ENCODE measurements at regions of chr17 and their contacts with region 1.

Region 1: DNA sequence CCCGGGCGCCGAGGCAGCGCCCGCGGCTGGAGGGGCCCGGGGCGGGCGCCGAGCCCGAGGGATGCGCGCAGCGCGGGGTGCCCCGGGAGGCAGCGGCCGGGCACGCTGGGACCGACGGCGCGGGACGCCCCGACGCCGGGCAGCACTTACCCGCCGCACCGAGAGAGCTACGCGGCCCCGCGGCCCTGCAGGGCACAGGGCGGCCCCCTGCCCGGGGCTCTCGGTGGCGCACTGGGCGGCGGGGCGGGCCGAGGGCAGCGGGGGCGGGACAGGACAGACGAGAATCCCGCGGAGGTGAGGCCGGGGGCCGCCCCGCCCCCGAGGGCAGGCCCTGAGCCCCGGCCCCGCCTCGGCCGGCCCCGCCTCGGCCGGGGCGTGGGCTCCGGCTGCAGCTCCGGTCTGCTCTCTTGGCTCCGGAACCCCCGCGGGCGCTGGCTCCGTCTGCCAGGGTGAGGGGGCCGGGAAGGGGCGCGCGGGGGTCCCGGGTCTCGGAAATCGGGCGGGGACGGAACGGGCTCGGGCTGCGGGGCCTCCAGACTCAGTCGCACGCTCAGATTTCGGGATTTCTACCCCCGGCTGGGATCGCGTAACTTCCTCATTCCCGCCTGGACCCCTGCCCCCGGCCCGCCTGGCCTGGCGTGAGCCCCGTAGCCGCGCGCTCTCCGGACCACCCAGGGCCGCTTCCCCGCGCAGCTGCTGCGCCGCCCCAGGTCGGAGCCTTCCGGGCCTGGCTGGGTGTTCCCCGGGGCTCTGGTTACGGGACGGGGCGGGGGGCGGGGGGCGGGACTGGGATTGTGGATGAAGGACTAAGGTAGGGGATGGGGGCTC is at the start of gene PLD2:
- DNase-seq: peak; percentile 90
- ATAC-seq: peak; percentile 99
- H3K4me3 Mint-ChIP-seq: peak within 1 kb of the TSS; percentile 83
- H3K27ac Mint-ChIP-seq: peak within 1 kb of the TSS; percentile 56
- H3K4me1 Mint-ChIP-seq: peaks cover 17% of the 10 kb centered on the region
- H3K27me3 Mint-ChIP-seq: no peaks in the 10 kb centered on the region
- CTCF ChIP-seq: no peak
- total RNA-seq, gene PLD2: 49.9 and 54.3 TPM in 2 replicates

Region 2: GRCh38 chr17:4881761-4882555 is 75.0 kb after region 1 on chr17:
- CTCF ChIA-PET with region 1: no interaction called
- POLR2A ChIA-PET with region 1: no interaction called
- intact Hi-C with region 1: loop called (anchors 1 kb)
- DNase-seq: peak; percentile 50
- ATAC-seq: peak; percentile 93
- H3K4me3 Mint-ChIP-seq: no peak overlapping the region
- H3K27ac Mint-ChIP-seq: no peak overlapping the region
- H3K4me1 Mint-ChIP-seq: peaks cover 6% of the 10 kb centered on the region
- H3K27me3 Mint-ChIP-seq: no peaks in the 10 kb centered on the region
- CTCF ChIP-seq: peak; percentile 45

Region 3: GRCh38 chr17:6507535-6507934 is 1700.5 kb after region 1 on chr17:
- CTCF ChIA-PET with region 1: no interaction called
- POLR2A ChIA-PET with region 1: no interaction called
- intact Hi-C with region 1: no loop called
- DNase-seq: no peak
- ATAC-seq: no peak
- H3K4me3 Mint-ChIP-seq: no peak overlapping the region
- H3K27ac Mint-ChIP-seq: no peak overlapping the region
- H3K4me1 Mint-ChIP-seq: no peaks in the 10 kb centered on the region
- H3K27me3 Mint-ChIP-seq: peaks cover 2% of the 10 kb centered on the region
- CTCF ChIP-seq: no peak